ENCODE measurements at regions of chr6 and their contacts with region 1.

Region 1: GRCh38 chr6:56542364-56543331 is 100.0 kb downstream of the DST start:
- DNase-seq: peak; percentile 94
- H3K4me3 ChIP-seq: peak overlapping the region; percentile 68
- H3K27ac ChIP-seq: peak overlapping the region; percentile 87
- H3K27me3 ChIP-seq: no peaks in the 10 kb centered on the region
- CTCF ChIP-seq: peak; percentile 31; the same call in 1 of the 2 replicates

Region 2: GRCh38 chr6:56314683-56315523 is 227.7 kb before region 1 on chr6:
- CTCF ChIA-PET with region 1: interaction called, 16 read pairs
- POLR2A ChIA-PET with region 1: no interaction called
- DNase-seq: no peak
- H3K4me3 ChIP-seq: no peak overlapping the region
- H3K27ac ChIP-seq: no peak overlapping the region
- H3K27me3 ChIP-seq: no peaks in the 10 kb centered on the region
- CTCF ChIP-seq: peak; percentile 86

Region 3: DNA sequence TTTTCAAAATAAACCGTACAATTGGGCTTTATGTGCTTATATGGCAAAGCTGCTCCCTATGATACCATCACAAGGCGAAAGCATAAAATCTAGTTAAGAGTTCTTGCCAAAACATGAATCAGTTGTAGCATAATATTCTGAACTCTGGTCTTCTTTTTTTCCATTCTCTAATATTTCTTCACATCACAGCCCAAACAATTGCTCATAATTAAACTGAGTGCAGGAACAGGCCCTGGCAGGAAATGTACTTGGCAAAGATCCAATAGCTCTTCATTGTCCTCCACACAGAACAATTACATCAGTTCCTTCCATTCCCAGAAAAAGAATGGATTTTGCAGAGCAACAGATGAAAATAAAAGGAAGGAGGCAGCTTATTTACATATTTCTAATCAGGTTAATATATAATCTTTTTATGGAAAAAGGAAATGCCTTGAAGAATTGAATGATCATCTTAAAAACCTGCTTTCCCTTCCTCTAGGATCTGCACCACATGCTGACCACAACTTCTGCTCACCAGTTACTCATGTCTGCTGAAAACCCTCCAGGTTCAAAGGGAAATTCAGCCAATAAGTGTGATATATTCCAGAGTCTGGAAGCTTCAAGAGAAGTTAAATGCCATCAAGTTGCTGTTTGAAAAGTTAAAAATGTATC is 172.0 kb before region 1 on chr6:
- CTCF ChIA-PET with region 1: interaction called, 10 read pairs
- POLR2A ChIA-PET with region 1: interaction called, 4 read pairs
- DNase-seq: peak; percentile 59
- H3K4me3 ChIP-seq: no peak overlapping the region
- H3K27ac ChIP-seq: peak overlapping the region; percentile 63
- H3K27me3 ChIP-seq: no peaks in the 10 kb centered on the region
- CTCF ChIP-seq: no peak

Region 4: GRCh38 chr6:56510984-56511531 is 31.6 kb before region 1 on chr6:
- CTCF ChIA-PET with region 1: interaction called, 11 read pairs
- POLR2A ChIA-PET with region 1: no interaction called
- DNase-seq: no peak
- H3K4me3 ChIP-seq: no peak overlapping the region
- H3K27ac ChIP-seq: no peak overlapping the region
- H3K27me3 ChIP-seq: no peaks in the 10 kb centered on the region
- CTCF ChIP-seq: no peak

Region 5: GRCh38 chr6:56524891-56525703 is 17.6 kb before region 1 on chr6:
- CTCF ChIA-PET with region 1: interaction called, 5 read pairs
- POLR2A ChIA-PET with region 1: interaction called, 17 read pairs
- DNase-seq: peak; percentile 84
- H3K4me3 ChIP-seq: no peak overlapping the region
- H3K27ac ChIP-seq: peak overlapping the region; percentile 75
- H3K27me3 ChIP-seq: no peaks in the 10 kb centered on the region
- CTCF ChIP-seq: no peak

Region 6: GRCh38 chr6:56531839-56532595 is 10.6 kb before region 1 on chr6:
- CTCF ChIA-PET with region 1: interaction called, 23 read pairs
- POLR2A ChIA-PET with region 1: interaction called, 13 read pairs
- DNase-seq: no peak
- H3K4me3 ChIP-seq: no peak overlapping the region
- H3K27ac ChIP-seq: no peak overlapping the region
- H3K27me3 ChIP-seq: no peaks in the 10 kb centered on the region
- CTCF ChIP-seq: no peak